Tibial artery (tissue), 4 donors: ENCODE measurements at regions of chr12 and their contacts with region 1.

Region 1: GRCh38 chr12:57069523-57069922 is 9.1 kb downstream of the NEMP1 start:
- DNase-seq: peak; percentile 80 to 87
- H3K4me3 ChIP-seq: no peak overlapping the region
- H3K27ac ChIP-seq: peak overlapping the region; percentile 73 to 78
- H3K4me1 ChIP-seq: peaks cover 0 to 28% (median 6%) of the 10 kb centered on the region in 4 donors
- H3K27me3 ChIP-seq: no peaks in the 10 kb centered on the region
- CTCF ChIP-seq: peak; percentile 88 to 96

Region 2: DNA sequence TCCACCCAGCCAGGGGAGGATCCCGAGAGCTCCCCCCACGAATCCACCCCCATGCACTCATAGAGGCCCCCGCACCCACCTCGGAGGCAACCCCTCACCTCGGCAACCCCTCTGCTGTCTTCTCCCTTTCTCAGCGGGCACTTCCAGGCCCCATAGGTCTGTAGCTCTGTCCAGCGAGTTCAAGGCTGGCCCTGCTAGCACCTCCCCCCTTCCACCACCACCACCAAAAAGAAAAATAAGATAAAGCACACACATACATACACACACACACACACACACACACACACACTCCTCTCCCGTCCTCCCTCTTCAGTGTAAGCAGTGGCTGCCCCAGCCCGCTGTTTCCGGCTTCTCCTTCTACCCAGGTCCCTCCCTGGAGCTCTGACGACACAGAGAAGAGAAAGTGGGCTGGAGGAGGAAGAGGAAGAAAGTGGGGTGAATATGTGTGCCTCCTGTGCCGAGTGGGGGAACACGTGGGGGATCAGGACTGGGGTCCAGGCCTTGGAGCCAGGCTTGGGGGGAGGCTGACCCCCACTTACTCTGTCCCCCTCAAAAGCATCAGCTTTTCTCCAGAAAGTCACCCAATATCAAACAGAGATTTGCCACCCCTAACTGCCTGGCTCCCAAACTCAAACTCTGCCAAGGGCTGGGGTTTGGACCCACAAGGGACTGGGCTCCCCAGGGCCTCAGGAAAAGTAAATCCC is 41.7 kb after region 1 on chr12 and contains the start of gene STAT6:
- intact Hi-C with region 1: loop called (anchors 2 kb)
- DNase-seq: peak; percentile 93 to 94
- H3K4me3 ChIP-seq: peak within 1 kb of the TSS; percentile 65 to 74
- H3K27ac ChIP-seq: peak within 1 kb of the TSS; percentile 96 to 99
- H3K4me1 ChIP-seq: peaks cover 4 to 39% (median 31%) of the 10 kb centered on the region in 4 donors
- H3K27me3 ChIP-seq: no peaks in the 10 kb centered on the region
- CTCF ChIP-seq: no peak

Region 3: DNA sequence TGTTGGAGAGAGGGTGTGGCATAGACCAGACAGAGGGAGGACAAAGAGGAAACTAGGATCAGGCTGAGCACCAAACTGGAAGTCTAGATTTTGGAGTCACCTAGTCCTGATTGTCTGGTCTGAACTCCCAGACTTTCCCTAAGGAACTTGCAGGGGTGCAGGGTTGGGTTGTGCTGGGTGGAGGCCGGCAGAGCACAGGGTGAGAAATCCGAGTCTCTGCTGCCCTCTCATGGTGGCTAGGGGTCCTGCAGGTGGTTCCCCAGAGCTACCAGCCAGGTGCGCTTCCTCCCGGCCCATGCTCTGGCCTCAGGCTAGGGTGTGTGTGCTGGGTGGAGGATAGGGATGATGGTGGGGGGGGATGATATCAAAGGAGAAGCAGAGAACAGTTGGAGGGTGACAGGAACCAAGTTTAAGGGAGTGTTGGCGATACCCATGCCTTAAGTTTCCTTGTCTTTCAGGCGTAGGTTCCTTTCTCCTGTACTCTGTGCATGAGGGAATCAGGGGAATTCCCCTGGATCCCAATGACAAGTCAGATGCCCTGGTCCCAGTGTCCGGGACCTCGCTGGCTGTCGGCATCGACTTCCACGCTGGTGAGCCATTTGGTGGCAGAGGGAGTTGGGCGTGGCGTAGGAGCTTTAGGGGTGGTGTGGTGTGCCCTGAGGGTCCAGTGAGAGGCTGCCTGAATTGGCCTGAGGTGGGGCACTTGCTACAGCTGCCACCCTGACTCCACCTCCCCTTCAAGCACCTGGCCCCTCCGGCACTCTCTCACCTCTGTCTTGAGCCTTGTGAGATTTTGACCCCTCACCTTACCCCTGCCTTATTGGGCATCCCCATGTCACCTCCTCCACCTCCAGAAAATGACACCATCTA is 113.6 kb after region 1 on chr12:
- intact Hi-C with region 1: loop called (anchors 5 kb)
- DNase-seq: peak; percentile 63 to 81
- H3K4me3 ChIP-seq: no peak overlapping the region
- H3K27ac ChIP-seq: peak overlapping the region in 1 of 2 donors; percentile 19
- H3K4me1 ChIP-seq: no peaks in the 10 kb centered on the region
- H3K27me3 ChIP-seq: no peaks in the 10 kb centered on the region
- CTCF ChIP-seq: peak; percentile 85 to 95

Region 4: DNA sequence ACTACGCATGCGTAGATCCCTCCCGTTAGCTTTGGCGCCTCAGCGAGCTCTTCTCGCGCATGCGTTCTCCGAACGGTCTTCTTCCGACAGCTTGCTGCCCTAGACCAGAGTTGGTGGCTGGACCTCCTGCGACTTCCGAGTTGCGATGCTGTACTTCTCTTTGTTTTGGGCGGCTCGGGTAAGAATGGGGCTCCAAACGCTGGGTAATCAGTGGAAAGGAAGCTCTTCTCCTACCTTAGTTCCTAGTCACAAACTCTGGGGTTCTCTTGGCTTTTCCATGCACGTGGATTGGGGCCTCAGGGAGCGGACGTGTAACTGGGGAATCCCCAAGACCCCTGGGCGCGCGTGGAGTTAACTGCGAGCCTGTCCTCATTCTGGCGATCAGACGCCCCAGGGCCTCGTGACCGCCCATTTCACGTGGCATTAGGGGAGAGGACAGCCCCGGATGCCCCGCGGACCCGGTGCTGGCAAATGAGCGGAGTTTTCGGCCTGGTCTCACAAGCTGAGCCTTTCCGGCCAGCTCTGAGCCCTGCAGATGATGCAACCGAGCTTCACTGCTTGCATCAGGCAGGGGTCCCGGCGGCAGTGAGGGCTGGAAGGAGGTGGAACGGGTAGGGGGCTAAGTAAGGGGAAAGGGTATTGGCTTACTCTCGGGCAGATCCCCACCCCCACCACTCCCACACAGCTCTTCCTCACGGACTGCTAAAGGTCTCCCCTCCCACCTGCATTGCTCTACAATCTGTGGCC is 160.3 kb after region 1 on chr12 and contains the start of gene SHMT2:
- intact Hi-C with region 1: no loop called
- DNase-seq: peak; percentile 92 to 96
- H3K4me3 ChIP-seq: peak within 1 kb of the TSS; percentile 62
- H3K27ac ChIP-seq: peak within 1 kb of the TSS; percentile 84 to 95
- H3K4me1 ChIP-seq: peaks cover 0 to 43% (median 33%) of the 10 kb centered on the region in 4 donors
- H3K27me3 ChIP-seq: peaks cover 0 to 25% of the 10 kb centered on the region in 2 donors
- CTCF ChIP-seq: no peak